PC-9 (cell line): ENCODE measurements at regions of chr11 and their contacts with region 1.

Region 1: GRCh38 chr11:64976651-64977050 is 4.7 kb upstream of the MAJIN start:
- DNase-seq: no peak
- H3K4me3 ChIP-seq: no peak overlapping the region
- H3K27ac ChIP-seq: no peak overlapping the region
- H3K4me1 ChIP-seq: peaks cover 2% of the 10 kb centered on the region; the same call in 1 of the 2 replicates
- H3K27me3 ChIP-seq: peaks cover 9% of the 10 kb centered on the region; the same call in 1 of the 2 replicates
- CTCF ChIP-seq: no peak

Region 2: GRCh38 chr11:64878494-64879243 is 98.0 kb before region 1 on chr11 and contains the start of gene EHD1:
- CTCF ChIA-PET with region 1: no interaction called
- POLR2A ChIA-PET with region 1: no interaction called
- intact Hi-C with region 1: no loop called
- DNase-seq: peak; percentile 92 to 99
- H3K4me3 ChIP-seq: peak within 1 kb of the TSS; percentile 98
- H3K27ac ChIP-seq: peak within 1 kb of the TSS; percentile 80
- H3K4me1 ChIP-seq: peaks cover 28% of the 10 kb centered on the region
- H3K27me3 ChIP-seq: no peaks in the 10 kb centered on the region
- CTCF ChIP-seq: peak; percentile 39
- total RNA-seq, gene EHD1: 110 and 134 TPM in 2 replicates

Region 3: DNA sequence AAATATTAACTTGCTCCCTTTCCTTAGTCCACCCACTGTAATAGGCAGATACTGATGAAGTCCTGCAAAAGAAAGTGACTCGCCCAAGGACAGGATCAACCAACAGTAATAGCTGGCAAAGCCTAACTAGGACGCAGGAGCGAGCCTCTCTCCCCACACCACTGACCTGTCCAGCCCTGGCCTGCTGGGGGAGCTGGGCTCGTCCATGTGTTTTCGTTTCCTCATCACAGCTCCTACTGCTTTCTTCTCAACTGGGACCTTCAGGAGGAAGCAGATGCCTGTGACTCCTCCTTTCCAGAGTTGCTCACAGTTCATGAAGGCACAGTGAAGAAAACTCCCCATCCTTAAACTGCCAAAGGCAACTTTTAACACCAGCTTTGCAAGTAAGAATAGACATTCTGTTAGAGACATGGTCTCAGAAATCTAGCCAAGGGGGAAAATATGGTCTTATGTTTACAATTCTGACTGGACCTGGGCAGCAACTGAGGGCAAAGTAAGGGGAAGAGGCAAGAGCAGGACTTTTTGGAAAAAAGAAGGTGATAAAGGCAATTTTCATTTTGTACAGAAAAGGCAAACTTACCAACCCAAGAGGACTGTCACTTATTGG is 29.3 kb before region 1 on chr11:
- CTCF ChIA-PET with region 1: no interaction called
- POLR2A ChIA-PET with region 1: interaction called, 18 read pairs
- intact Hi-C with region 1: no loop called
- DNase-seq: no peak
- H3K4me3 ChIP-seq: no peak overlapping the region
- H3K27ac ChIP-seq: no peak overlapping the region
- H3K4me1 ChIP-seq: no peaks in the 10 kb centered on the region
- H3K27me3 ChIP-seq: no peaks in the 10 kb centered on the region
- CTCF ChIP-seq: no peak

Region 4: DNA sequence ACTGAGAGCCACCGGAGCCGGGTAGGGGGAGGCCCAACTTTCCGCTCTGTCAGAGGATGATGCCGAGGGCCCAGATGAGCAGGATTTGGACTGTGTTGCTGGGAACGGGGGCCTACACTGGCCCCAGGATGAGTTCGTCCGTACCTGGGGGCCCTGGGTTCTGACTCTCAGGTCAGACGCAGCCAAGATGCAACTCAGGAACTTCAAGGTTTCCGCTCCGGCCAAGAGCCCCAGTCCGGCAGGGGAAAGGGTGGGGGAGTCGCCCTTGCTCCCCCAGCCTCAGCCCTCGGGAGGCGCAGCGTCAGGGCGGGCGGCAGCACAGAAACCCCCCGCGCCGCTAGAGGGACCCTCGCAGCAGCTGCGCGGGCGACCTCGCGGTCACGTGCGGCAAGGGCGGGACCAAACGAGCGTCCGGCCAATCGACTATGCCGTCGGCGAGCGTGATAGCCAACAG is 37.1 kb after region 1 on chr11:
- CTCF ChIA-PET with region 1: no interaction called
- POLR2A ChIA-PET with region 1: no interaction called
- intact Hi-C with region 1: no loop called
- DNase-seq: peak in 1 of 2 experiments; percentile 80
- H3K4me3 ChIP-seq: peak overlapping the region; percentile 76
- H3K27ac ChIP-seq: peak overlapping the region; percentile 71
- H3K4me1 ChIP-seq: peaks cover 14% of the 10 kb centered on the region
- H3K27me3 ChIP-seq: no peaks in the 10 kb centered on the region
- CTCF ChIP-seq: peak; percentile 75